PC-3 (cell line): ENCODE measurements at regions of chr12 and their contacts with region 1.

Region 1: GRCh38 chr12:95336390-95337067 is 118.9 kb downstream of the VEZT start:
- DNase-seq: peak; percentile 92
- ATAC-seq: peak; percentile 76
- H3K4me3 ChIP-seq: peak overlapping the region; percentile 32
- H3K27ac ChIP-seq: peak overlapping the region; percentile 49
- H3K4me1 ChIP-seq: peaks cover 42% of the 10 kb centered on the region
- H3K27me3 ChIP-seq: no peaks in the 10 kb centered on the region
- CTCF ChIP-seq: peak; percentile 98

Region 2: DNA sequence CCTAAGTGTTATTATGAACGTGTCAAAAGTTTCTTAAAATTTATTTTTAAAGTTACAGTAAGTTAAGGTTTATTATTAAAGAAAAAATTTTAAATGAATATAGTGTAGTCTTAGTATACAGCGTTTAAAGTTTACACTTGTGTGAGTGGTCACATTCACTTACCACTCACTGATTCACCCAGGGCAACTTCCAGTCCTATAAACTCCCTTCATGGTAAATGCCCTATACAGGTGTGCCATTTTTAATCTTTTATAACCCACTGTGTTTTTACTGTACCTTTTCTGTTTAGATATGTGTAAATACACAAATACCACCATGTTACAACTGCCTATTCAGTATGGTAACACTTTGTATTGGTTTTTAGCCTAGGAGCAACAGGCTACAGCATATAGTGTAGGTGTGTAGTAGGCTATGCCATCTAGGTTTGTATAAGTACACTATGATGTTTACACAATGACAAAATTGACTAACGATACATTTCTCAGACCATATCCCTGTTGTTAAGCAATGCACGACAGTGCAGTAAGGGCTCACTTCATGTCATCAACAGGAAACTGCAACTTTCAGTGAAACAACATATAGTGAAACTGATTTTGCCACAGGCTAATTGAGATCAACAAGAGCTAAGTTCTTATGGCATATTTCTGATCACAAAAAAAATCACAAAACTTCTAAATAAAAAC is 574.1 kb before region 1 on chr12:
- CTCF ChIA-PET with region 1: no interaction called
- POLR2A ChIA-PET with region 1: no interaction called
- intact Hi-C with region 1: loop called (anchors 2 kb)
- DNase-seq: peak; percentile 66
- ATAC-seq: peak; percentile 53
- H3K4me3 ChIP-seq: no peak overlapping the region
- H3K27ac ChIP-seq: peak overlapping the region; percentile 82
- H3K4me1 ChIP-seq: peaks cover 24% of the 10 kb centered on the region
- H3K27me3 ChIP-seq: no peaks in the 10 kb centered on the region
- CTCF ChIP-seq: no peak

Region 3: DNA sequence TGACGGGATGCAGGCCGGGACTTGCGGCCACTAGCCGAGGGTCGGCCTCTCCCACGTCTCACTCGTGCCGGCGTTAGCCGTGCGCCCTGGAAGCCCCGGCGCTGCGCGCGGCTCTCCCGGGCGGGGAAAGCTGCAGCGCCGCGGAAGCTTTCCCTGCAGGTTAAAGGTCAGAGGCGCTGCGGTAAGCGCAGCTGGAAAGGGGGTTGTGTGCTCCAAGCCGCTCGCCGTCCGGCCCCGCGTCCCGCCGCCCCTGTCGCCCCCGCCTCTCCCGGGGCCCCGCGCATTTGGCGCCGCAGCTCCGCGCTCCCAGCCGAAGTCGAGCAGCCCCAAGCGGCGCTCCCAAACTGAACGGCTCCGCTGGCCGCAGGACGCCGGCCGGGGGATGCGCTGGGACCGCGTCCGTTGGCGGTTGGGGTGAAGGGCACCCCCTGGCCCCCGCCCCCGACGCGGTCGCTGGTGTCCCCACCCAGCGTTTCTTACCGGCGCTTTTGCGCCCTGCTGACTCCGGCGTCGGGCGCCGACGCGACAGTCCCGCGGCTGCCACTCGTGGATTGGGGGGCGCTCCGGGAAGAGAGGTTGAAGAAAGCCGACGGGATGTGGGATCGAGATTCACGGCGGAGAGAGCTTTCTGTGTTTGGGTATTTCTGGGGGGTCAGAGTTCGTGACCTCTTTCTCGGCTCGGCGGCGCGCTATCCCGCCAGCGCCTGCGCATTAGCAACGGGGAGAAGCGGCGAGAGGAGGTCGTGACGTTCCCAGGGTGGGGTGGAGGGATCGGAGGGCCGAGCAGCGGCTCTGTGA is 263.4 kb before region 1 on chr12 and contains the start of gene NR2C1:
- CTCF ChIA-PET with region 1: no interaction called
- POLR2A ChIA-PET with region 1: no interaction called
- intact Hi-C with region 1: loop called (anchors 1 kb)
- DNase-seq: peak; percentile 94
- ATAC-seq: peak; percentile 93
- H3K4me3 ChIP-seq: peak within 1 kb of the TSS; percentile 100
- H3K27ac ChIP-seq: peak within 1 kb of the TSS; percentile 46
- H3K4me1 ChIP-seq: peaks cover 6% of the 10 kb centered on the region
- H3K27me3 ChIP-seq: no peaks in the 10 kb centered on the region
- CTCF ChIP-seq: no peak
- total RNA-seq, gene NR2C1: 31.6 and 43.7 TPM in 2 replicates

Region 4: DNA sequence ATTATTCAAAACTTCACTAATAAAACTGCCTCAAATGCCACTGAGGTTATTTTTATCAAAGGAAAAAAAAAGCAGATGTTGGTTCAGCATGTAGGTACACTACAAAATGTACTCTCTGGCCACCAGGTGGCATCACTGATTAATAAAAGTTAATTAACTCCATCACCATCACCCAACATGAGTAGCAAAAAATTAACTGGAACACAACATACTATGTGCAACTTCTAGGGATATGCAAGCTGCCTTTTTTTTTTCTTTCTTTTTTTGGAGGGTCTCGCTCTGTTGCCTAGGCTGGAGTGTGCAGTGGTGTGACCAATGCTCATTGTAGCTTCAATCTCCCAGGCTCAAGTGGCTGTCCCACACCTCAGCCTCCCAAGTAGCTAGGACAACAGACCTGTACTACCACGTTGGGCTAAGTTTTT is 219.3 kb before region 1 on chr12:
- CTCF ChIA-PET with region 1: interaction called, 6 read pairs
- POLR2A ChIA-PET with region 1: interaction called, 8 read pairs
- intact Hi-C with region 1: loop called (anchors 1 kb)
- DNase-seq: peak; percentile 83
- ATAC-seq: peak; percentile 61
- H3K4me3 ChIP-seq: peak overlapping the region; percentile 47
- H3K27ac ChIP-seq: peak overlapping the region; percentile 78
- H3K4me1 ChIP-seq: peaks cover 49% of the 10 kb centered on the region
- H3K27me3 ChIP-seq: no peaks in the 10 kb centered on the region
- CTCF ChIP-seq: peak; percentile 92

Region 5: DNA sequence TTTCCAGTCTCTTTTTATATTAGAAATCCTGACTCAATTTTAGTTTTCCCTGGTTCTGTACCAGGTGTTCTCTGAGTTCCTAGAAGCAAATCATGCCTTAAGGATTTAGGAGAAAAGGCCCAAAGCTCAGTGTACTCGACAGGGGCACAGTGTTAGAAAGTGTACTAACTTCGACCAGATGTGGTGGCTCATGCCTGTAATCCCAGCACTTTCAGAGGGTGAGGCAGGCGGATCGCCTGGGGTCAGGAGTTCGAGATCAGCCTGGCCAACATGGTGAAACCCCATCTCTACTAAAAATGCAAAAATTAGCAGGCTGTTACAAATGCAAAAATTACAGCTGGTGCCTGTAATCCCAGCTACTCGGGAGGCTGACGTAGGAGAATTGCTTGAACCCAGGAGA is 106.9 kb before region 1 on chr12:
- CTCF ChIA-PET with region 1: interaction called, 13 read pairs
- POLR2A ChIA-PET with region 1: no interaction called
- intact Hi-C with region 1: no loop called
- DNase-seq: no peak
- ATAC-seq: no peak
- H3K4me3 ChIP-seq: no peak overlapping the region
- H3K27ac ChIP-seq: no peak overlapping the region
- H3K4me1 ChIP-seq: peaks cover 4% of the 10 kb centered on the region
- H3K27me3 ChIP-seq: no peaks in the 10 kb centered on the region
- CTCF ChIP-seq: no peak

Region 6: DNA sequence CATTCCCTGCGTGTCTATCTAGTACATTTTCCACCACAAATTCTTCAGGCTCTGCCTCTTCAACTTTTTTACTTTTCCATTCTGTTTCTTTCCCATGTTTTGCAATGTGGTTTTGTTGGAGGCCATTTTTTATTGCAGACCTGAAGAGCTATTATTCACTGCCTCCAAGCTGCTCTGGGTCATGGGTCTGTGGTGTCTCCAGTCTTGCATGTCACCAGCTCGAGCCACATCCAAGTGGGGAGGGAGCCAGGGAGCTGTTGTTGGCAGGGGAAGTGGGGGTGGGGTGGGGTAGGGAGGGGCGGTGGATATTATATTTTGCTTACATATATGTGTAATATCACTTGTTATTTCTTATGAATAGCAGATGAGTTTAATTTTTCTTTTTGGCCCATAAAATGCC is 49.8 kb before region 1 on chr12:
- CTCF ChIA-PET with region 1: no interaction called
- POLR2A ChIA-PET with region 1: no interaction called
- intact Hi-C with region 1: no loop called
- DNase-seq: peak; percentile 35
- ATAC-seq: peak; percentile 74
- H3K4me3 ChIP-seq: no peak overlapping the region
- H3K27ac ChIP-seq: peak overlapping the region; percentile 9; the same call in 1 of the 2 replicates
- H3K4me1 ChIP-seq: peaks cover 12% of the 10 kb centered on the region; the same call in 1 of the 2 replicates
- H3K27me3 ChIP-seq: no peaks in the 10 kb centered on the region
- CTCF ChIP-seq: no peak

Region 7: DNA sequence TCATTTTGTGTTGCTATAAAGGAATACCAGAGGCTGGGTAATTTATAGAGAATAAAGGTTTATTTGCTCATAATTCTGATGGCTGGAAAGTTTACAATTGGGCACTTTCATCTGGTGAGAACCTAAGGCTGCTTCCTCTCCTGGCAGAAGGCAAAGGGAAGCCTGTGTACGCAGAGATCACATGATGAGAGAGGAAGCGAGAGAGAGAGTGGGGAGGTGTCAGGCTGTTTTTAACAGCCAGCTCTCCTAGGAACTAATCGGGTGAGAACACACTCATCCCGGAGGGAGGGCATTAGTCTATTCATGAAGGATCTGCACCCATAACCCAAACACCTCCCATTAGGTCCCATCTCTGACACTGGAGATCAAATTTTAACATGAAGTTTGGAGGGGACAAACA is 91.9 kb after region 1 on chr12:
- CTCF ChIA-PET with region 1: no interaction called
- POLR2A ChIA-PET with region 1: no interaction called
- intact Hi-C with region 1: no loop called
- DNase-seq: no peak
- ATAC-seq: peak; percentile 69
- H3K4me3 ChIP-seq: no peak overlapping the region
- H3K27ac ChIP-seq: no peak overlapping the region
- H3K4me1 ChIP-seq: no peaks in the 10 kb centered on the region
- H3K27me3 ChIP-seq: no peaks in the 10 kb centered on the region
- CTCF ChIP-seq: no peak

Region 8: DNA sequence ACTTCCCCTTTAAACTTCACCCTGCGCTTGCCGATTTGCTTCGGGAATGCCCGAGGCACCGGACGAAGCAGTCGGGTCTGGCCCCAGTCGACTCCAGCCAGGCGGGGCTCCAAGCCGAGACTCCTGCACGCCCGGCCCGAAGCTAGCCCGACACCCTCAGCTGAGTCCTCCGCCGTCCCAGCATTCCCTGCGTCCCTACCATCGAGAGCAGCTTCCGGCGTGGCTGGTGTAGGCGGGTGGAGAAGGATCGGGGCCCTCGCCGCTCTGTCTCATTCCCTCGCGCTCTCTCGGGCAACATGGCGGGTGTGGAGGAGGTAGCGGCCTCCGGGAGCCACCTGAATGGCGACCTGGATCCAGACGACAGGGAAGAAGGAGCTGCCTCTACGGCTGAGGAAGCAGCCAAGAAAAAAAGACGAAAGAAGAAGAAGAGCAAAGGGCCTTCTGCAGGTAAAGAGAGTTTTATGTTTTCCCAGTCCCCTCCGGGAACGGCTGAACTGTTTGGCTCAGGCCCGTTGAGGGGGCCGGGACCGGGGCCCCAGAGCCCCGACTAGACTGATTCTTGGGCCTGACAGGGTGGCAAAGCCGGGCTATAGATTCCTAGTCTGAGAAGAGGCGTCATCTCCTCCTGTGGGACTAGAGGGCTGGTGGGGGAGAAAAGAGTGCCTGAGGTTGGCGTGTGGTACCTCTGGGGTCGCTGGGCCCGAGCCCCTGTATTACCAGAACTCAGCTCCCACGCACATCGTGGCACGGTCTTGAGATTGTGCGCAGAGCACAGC is 137.5 kb after region 1 on chr12 and contains the start of gene METAP2:
- CTCF ChIA-PET with region 1: no interaction called
- POLR2A ChIA-PET with region 1: interaction called, 3 read pairs
- intact Hi-C with region 1: loop called (anchors 5 kb)
- DNase-seq: peak; percentile 96
- ATAC-seq: peak; percentile 96
- H3K4me3 ChIP-seq: peak within 1 kb of the TSS; percentile 91
- H3K27ac ChIP-seq: peak within 1 kb of the TSS; percentile 83
- H3K4me1 ChIP-seq: peaks cover 22% of the 10 kb centered on the region
- H3K27me3 ChIP-seq: no peaks in the 10 kb centered on the region
- CTCF ChIP-seq: no peak
- total RNA-seq, gene METAP2: 79.2 and 85.5 TPM in 2 replicates